ENCODE measurements at regions of chr2 and their contacts with region 1.

Region 1: DNA sequence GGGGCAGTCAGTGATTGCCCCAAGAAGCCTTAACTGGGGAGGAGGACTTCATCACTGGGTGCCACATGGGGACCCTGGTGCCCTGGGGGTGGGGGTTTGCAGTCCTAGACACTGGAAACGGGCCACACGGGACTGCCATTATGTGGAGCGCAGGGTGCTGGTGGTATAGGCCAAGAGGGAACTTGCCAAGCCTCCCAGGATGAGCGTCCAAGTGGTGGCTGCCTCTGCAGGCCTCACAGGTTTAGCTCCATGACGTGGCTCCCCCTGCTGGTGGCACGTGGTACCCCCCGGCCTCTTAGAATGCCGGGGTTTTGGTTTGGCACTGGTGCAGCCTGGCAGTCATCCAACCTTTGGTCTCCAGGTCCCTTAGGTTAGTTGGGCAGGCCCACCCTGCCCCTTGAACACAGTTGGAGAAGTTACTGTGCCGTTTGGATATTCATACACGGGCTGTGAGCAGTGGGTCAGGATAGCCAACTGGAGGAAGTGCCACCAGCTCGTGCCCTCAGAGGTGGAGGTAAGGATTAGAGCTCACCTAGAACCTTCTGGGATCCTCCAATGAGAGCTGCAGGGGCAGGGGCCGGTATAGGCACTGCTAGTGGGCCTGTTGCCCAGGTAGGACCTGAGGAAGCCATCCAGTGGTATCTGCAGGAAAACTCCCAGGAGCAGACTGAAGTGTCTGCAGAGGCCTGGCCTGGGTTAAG is 5.6 kb downstream of the PTMA start:
- DNase-seq: peak; percentile 67 to 83 (median 82)
- H3K4me3 ChIP-seq: peak overlapping the region in 17 of 59 donors; percentile 1 to 37 (median 13)
- H3K27ac ChIP-seq: peak overlapping the region in 58 of 59 donors; percentile 30 to 100 (median 74)
- H3K27me3 ChIP-seq: no peaks in the 10 kb centered on the region
- CTCF ChIP-seq: peak; percentile 66 to 99 (median 94)

Region 2: DNA sequence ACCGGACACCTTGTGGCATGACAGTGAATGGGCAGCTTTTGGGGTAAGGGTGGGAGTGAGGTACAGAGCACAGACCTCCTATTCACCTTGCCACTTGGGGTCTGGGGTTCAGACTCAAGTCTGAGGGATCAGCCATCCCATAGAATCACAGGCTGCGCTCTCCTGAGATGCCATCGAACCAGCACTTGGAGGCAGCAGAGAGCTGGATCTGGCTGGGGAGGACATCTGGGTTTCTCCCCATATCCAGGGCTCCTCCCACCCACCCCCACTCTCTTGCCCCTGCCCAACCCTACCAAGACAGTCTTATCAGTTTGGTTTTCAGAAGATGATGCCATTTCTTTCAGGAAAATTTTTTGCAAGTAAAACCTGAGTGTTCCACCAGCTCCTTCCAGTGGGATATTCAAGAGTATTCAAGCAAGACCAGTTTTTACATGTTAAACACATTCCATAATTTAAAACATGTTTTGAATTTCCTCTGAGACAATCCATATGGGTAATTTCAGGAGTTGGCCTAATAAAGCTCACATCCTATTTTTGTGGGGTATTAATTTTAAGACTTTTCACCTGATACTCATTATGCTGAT is 150.4 kb before region 1 on chr2:
- intact Hi-C with region 1: loop called in 1 of 2 experiments (anchors 2 kb)
- DNase-seq: peak; percentile 41 to 79 (median 70)
- H3K4me3 ChIP-seq: no peak overlapping the region
- H3K27ac ChIP-seq: peak overlapping the region in 18 of 59 donors; percentile 2 to 70 (median 42)
- H3K27me3 ChIP-seq: no peaks in the 10 kb centered on the region
- CTCF ChIP-seq: peak; percentile 49 to 92 (median 81)

Region 3: GRCh38 chr2:231674587-231675338 is 39.1 kb before region 1 on chr2:
- intact Hi-C with region 1: loop called in 1 of 2 experiments (anchors 1 kb)
- DNase-seq: peak in 9 of 10 donors; percentile 58 to 79 (median 69)
- H3K4me3 ChIP-seq: peak overlapping the region in 5 of 59 donors; percentile 8 to 12 (median 9)
- H3K27ac ChIP-seq: peak overlapping the region; percentile 67 to 100 (median 91)
- H3K27me3 ChIP-seq: no peaks in the 10 kb centered on the region
- CTCF ChIP-seq: peak; percentile 65 to 95 (median 86)

Region 4: DNA sequence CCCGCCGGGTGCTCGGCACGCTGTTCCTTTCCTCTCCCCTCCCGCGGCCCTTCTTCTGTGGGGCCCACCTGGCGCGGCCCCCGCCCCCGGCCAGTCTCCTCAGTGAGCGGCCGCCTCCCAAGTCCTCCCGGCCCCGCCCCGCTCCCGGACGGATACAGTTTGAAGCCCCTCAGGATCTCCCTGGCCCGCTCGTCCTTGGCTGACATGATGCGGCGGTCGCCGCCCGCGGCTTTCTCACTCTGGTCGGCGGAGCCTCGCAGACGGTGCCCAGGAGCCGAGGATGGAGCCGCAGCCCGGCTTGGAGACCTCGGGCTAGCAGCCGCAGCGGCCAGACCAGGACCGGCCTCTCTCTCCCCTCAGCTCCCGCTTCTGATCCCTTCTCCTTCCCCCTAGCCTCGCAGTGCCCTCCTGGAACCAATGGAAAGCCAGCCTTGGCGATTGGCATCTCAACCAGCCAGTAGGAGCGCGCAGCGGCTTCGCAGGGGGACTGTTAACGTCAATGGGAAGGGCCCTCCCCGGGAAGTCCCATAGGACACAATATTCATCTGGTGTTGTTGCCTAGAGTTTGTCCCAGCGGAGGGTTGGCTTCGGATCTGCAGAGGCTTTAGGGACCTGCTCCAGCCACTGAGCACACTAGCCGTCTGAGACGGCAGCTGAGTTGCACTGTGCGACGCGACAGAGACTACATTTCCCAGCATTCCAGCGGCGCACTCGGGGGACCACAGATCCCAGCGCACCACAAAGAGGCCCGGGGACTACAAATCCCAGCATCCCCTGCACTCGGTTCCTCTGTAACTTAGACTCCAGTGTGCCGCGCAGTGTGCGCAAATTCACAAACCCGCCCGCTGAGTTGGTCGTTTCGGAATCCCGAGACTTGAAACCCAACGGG is 67.3 kb after region 1 on chr2 and contains the start of gene PDE6D:
- intact Hi-C with region 1: loop called (anchors 5 kb)
- DNase-seq: peak; percentile 97 to 99 (median 98)
- H3K4me3 ChIP-seq: peak within 1 kb of the TSS; percentile 67 to 100 (median 92)
- H3K27ac ChIP-seq: peak within 1 kb of the TSS; percentile 63 to 97 (median 93)
- H3K27me3 ChIP-seq: no peaks in the 10 kb centered on the region
- CTCF ChIP-seq: peak in 22 of 56 donors; percentile 5 to 58 (median 22)
- total RNA-seq, gene PDE6D: 26.1 to 44.6 (median 33.3) TPM

Measured in dorsolateral prefrontal cortex (tissue), 120 donors.